Ascending aorta (tissue), 2 donors: ENCODE measurements at regions of chr9 and their contacts with region 1.

Region 1: GRCh38 chr9:84170521-84171141 is 169.9 kb downstream of the SLC28A3 start:
- DNase-seq: peak; percentile 11 to 85
- H3K4me3 ChIP-seq: no peak overlapping the region
- H3K27ac ChIP-seq: peak overlapping the region; percentile 3 to 44
- H3K4me1 ChIP-seq: no peaks in the 10 kb centered on the region
- H3K27me3 ChIP-seq: no peaks in the 10 kb centered on the region
- CTCF ChIP-seq: no peak

Region 2: DNA sequence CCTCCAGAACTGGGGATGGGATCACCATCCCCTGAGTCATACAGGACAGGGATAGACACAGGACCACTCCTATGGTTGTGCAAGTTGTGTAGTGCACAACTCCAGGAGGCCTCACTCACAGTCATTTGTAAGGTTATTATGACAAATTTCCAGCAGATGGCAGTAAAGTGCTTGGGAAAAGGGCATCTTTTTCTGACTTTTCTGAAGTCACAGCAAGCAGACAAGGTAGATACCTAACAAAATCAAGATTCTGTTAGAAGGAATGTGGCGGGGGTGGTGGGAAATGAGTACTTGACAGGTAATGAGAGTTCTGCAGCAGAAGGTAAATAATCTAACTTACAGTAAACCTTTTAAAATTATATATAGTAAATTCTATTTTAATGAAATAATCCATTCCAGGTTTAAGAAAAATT is 232.7 kb before region 1 on chr9:
- intact Hi-C with region 1: loop called (anchors 5 kb)
- DNase-seq: no peak
- H3K4me3 ChIP-seq: no peak overlapping the region
- H3K27ac ChIP-seq: no peak overlapping the region
- H3K4me1 ChIP-seq: no peaks in the 10 kb centered on the region
- H3K27me3 ChIP-seq: no peaks in the 10 kb centered on the region
- CTCF ChIP-seq: peak; percentile 37 to 66 (median 38)

Region 3: DNA sequence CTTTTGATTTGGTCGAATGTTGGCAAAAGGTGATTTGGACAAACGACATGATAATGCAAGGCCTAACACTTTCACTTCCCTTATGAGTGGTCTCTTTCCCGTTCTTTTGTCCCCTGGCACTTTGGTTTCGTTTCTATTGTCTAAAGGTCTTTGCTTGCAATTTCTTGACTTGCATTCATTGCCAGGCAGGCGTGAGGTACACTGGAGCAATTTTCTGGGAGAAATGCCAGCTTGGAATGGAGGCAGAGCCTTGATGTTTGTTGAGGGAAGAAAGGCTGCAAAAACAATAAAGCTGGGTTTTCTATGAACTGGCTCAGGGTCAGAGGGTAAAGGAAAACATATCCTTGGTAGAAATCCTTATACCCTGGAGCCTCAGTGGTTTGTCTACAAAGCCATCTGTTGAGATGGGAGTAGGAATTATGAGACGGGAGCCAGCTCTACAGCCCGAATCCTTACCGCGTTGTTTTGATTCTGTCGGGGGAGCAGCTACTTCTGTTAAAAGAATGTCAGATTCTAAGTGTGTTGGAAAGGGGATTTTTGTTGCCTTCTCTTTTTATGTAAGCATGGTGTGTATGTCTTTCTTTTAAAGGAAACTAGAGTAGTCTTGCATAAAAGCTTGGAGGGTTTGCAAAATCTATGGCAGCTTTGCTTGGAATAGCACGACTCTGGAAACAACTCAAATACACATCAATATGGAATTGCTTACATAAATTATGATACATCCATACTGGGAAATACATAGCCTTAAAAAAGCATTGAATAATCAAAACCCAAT is 31.1 kb before region 1 on chr9:
- intact Hi-C with region 1: loop called (anchors 5 kb)
- DNase-seq: no peak
- H3K4me3 ChIP-seq: no peak overlapping the region
- H3K27ac ChIP-seq: no peak overlapping the region
- H3K4me1 ChIP-seq: peaks cover 0 to 8% of the 10 kb centered on the region in 2 donors
- H3K27me3 ChIP-seq: peaks cover 15% of the 10 kb centered on the region
- CTCF ChIP-seq: no peak

Region 4: GRCh38 chr9:84146893-84147710 is 23.5 kb before region 1 on chr9:
- intact Hi-C with region 1: loop called (anchors 2 kb)
- DNase-seq: no peak
- H3K4me3 ChIP-seq: no peak overlapping the region
- H3K27ac ChIP-seq: peak overlapping the region; percentile 52 to 74
- H3K4me1 ChIP-seq: peaks cover 0 to 10% of the 10 kb centered on the region in 2 donors
- H3K27me3 ChIP-seq: peaks cover 1% of the 10 kb centered on the region
- CTCF ChIP-seq: no peak